ENCODE measurements at regions of chr5 and their contacts with region 1.

Region 1: DNA sequence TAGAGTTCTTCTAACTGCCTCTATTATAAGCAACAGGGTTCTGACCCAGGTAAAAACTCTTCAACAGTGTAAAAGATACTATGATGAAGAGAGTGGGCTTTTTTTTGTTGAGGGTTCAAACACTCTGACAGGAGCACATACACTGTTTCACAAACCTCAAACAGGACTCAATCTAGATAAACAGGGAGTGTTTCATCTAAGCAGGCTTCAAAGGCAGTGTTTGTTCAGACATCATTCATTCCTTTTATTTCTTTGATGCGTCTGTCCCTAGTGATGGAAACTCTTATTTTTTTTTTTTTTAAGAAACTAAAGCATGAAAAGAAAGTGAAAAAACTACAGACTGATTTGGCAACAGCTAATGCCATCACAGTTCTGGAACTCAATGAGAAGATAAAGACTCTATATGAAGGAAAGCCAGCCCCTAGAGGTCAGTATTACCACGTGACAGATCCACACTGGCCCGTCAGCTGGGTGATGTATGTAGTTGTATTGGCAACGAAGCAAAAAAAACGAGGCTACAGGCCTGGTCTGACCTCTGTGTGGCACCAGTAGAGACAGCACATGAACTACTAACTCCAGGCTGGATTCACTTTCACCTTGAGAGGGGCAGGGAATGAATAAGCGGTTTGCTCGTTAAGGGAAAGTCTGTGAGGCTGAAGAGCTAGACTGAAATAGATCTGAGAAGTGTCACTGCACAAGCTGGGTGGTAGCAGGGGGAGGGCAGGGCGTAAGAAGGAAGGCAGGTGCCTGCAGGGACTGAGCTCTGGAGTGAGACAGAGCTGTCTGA is 172.2 kb downstream of the CCDC192 start:
- DNase-seq: peak; percentile 87
- H3K4me3 ChIP-seq: no peak overlapping the region
- H3K4me3 Mint-ChIP-seq: no peak overlapping the region
- H3K27ac Mint-ChIP-seq: peak overlapping the region; percentile 43
- H3K4me1 ChIP-seq: peaks cover 40% of the 10 kb centered on the region
- H3K4me1 Mint-ChIP-seq: peaks cover 21% of the 10 kb centered on the region
- H3K27me3 ChIP-seq: peaks cover 1% of the 10 kb centered on the region; the same call in 1 of the 2 replicates
- H3K27me3 Mint-ChIP-seq: no peaks in the 10 kb centered on the region
- CTCF ChIP-seq: peak; percentile 48 to 50

Region 2: GRCh38 chr5:127564002-127564769 is 311.2 kb before region 1 on chr5:
- CTCF ChIA-PET with region 1: interaction called, 6 read pairs
- POLR2A ChIA-PET with region 1: no interaction called
- intact Hi-C with region 1: loop called (anchors 1 kb)
- DNase-seq: peak; percentile 53 to 71
- H3K4me3 ChIP-seq: no peak overlapping the region
- H3K4me3 Mint-ChIP-seq: no peak overlapping the region
- H3K27ac Mint-ChIP-seq: no peak overlapping the region
- H3K4me1 ChIP-seq: no peaks in the 10 kb centered on the region
- H3K4me1 Mint-ChIP-seq: no peaks in the 10 kb centered on the region
- H3K27me3 ChIP-seq: no peaks in the 10 kb centered on the region
- H3K27me3 Mint-ChIP-seq: no peaks in the 10 kb centered on the region
- CTCF ChIP-seq: peak; percentile 60 to 80

Region 3: GRCh38 chr5:127849891-127850290 is 25.5 kb before region 1 on chr5:
- CTCF ChIA-PET with region 1: no interaction called
- POLR2A ChIA-PET with region 1: no interaction called
- intact Hi-C with region 1: loop called (anchors 1 kb)
- DNase-seq: peak; percentile 84 to 88
- H3K4me3 ChIP-seq: no peak overlapping the region
- H3K4me3 Mint-ChIP-seq: no peak overlapping the region
- H3K27ac Mint-ChIP-seq: peak overlapping the region; percentile 57
- H3K4me1 ChIP-seq: peaks cover 26% of the 10 kb centered on the region
- H3K4me1 Mint-ChIP-seq: peaks cover 21% of the 10 kb centered on the region
- H3K27me3 ChIP-seq: no peaks in the 10 kb centered on the region
- H3K27me3 Mint-ChIP-seq: no peaks in the 10 kb centered on the region
- CTCF ChIP-seq: no peak

Region 4: GRCh38 chr5:128083033-128083810 is 207.8 kb after region 1 on chr5 and contains the start of gene SLC12A2:
- CTCF ChIA-PET with region 1: interaction called, 3 read pairs
- POLR2A ChIA-PET with region 1: no interaction called
- intact Hi-C with region 1: loop called (anchors 1 kb)
- DNase-seq: peak; percentile 93
- H3K4me3 ChIP-seq: peak within 1 kb of the TSS; percentile 97
- H3K4me3 Mint-ChIP-seq: peak within 1 kb of the TSS; percentile 87
- H3K27ac Mint-ChIP-seq: peak within 1 kb of the TSS; percentile 81
- H3K4me1 ChIP-seq: peaks cover 15% of the 10 kb centered on the region; the same call in 1 of the 2 replicates
- H3K4me1 Mint-ChIP-seq: peaks cover 47% of the 10 kb centered on the region
- H3K27me3 ChIP-seq: no peaks in the 10 kb centered on the region
- H3K27me3 Mint-ChIP-seq: no peaks in the 10 kb centered on the region
- CTCF ChIP-seq: no peak
- total RNA-seq, gene SLC12A2: 85.2 and 87.8 TPM in 2 replicates

Region 5: GRCh38 chr5:128201065-128201926 is 325.9 kb after region 1 on chr5:
- CTCF ChIA-PET with region 1: interaction called, 5 read pairs
- POLR2A ChIA-PET with region 1: no interaction called
- intact Hi-C with region 1: loop called (anchors 1 kb)
- DNase-seq: peak; percentile 75 to 87
- H3K4me3 ChIP-seq: no peak overlapping the region
- H3K4me3 Mint-ChIP-seq: peak overlapping the region; percentile 57
- H3K27ac Mint-ChIP-seq: no peak overlapping the region
- H3K4me1 ChIP-seq: peaks cover 21% of the 10 kb centered on the region
- H3K4me1 Mint-ChIP-seq: peaks cover 25% of the 10 kb centered on the region
- H3K27me3 ChIP-seq: no peaks in the 10 kb centered on the region
- H3K27me3 Mint-ChIP-seq: no peaks in the 10 kb centered on the region
- CTCF ChIP-seq: peak; percentile 77 to 83

Region 6: DNA sequence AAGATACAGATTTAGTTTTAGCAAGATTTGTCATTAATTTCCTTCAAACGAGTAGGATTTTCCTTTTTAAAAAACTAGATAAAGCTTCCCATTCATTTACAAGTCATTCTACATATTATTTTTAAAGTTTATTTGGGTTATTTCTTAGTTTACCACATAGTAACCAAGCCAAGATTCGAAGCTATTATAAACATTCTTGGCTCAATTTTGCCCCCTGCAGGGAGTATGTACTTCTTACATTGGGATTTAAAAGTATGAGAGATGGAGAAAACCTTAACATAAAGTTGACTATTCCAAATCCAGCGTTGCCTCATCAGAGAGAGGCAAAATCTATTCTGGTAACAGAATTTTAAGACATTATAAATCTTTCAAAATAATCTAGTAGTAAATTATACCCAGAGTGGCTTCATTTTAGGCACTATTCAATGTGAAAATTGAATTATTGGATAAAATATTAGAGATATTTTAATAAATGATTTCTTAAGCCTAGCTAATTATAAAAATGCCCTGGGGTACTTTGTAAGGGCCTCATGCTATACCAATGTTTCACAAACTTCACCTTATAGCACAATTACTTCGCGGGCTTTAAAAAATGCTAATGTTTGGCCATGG is 623.5 kb after region 1 on chr5:
- CTCF ChIA-PET with region 1: no interaction called
- POLR2A ChIA-PET with region 1: no interaction called
- intact Hi-C with region 1: loop called (anchors 2 kb)
- DNase-seq: peak in 1 of 2 experiments; percentile 35
- H3K4me3 ChIP-seq: no peak overlapping the region
- H3K4me3 Mint-ChIP-seq: no peak overlapping the region
- H3K27ac Mint-ChIP-seq: no peak overlapping the region
- H3K4me1 ChIP-seq: no peaks in the 10 kb centered on the region
- H3K4me1 Mint-ChIP-seq: no peaks in the 10 kb centered on the region
- H3K27me3 ChIP-seq: no peaks in the 10 kb centered on the region
- H3K27me3 Mint-ChIP-seq: no peaks in the 10 kb centered on the region
- CTCF ChIP-seq: peak; percentile 51 to 64

Measured in Caco-2 (cell line).